ENCODE measurements at regions of chr12 and their contacts with region 1.

Region 1: GRCh38 chr12:4366090-4366489 is 13.4 kb downstream of the FGF23 start:
- DNase-seq: no peak
- H3K4me3 ChIP-seq: no peak overlapping the region
- CTCF ChIP-seq: no peak

Region 2: DNA sequence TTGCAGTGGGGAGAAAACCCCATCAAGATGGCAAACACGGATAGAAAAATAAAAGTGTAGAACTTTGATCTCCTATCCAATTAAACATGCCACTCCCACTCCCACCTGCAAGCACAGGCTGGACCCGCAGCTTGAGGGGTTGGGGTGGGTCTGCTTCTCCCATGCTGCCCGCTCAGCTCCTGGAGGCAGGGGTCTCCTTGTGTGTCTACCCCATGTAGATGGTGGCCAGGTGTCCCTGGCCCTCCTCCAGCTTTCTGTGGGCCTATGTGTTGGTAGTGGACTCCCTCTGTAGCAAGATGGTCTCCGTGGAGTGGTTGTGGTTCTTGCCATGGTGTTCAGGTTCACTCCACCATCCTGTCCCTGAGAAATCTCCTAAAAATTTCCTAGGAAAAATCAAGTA is 36.9 kb after region 1 on chr12:
- in situ Hi-C with region 1: loop called (anchors 5 kb)
- DNase-seq: no peak
- H3K4me3 ChIP-seq: no peak overlapping the region
- CTCF ChIP-seq: no peak

Measured in astrocyte of the cerebellum (primary cell).